Astrocyte of the cerebellum (primary cell): ENCODE measurements at regions of chr15 and their contacts with region 1.

Region 1: DNA sequence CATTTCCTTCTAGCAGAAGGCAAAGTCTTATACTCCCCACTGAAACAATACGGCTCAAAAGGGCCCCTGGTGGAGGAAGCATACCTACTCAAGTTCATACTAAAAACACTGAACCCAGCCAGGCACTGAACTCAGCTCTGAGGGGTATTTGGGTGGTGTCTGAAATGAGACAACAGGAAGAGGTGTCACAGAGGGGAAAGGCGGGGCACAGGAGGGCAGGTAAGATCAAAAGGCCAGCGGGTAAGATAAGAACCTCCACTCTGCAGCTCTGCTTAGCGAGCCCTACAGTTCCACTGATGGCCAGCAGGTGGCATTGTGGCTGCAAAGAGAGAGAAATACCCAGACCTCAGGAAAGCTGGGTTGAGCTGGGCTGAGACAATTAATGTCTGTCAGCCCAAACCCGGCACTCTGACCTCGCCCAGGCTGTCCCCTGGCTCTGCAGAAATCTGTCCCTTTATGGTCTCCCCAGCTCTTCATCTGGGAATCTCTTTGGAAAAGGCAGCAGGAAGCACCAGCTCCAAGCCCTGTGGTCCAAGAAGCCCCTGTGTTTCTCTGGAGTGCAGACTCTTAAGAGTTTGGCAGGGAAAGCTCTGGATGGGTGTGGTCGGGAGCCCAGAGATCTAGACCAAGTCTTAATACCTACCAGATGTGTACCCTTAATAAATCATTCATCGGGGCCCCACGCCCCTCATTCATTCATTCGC is 8.4 kb downstream of the MFGE8 start:
- DNase-seq: peak; percentile 43
- H3K4me3 ChIP-seq: no peak overlapping the region
- CTCF ChIP-seq: peak; percentile 99

Region 2: DNA sequence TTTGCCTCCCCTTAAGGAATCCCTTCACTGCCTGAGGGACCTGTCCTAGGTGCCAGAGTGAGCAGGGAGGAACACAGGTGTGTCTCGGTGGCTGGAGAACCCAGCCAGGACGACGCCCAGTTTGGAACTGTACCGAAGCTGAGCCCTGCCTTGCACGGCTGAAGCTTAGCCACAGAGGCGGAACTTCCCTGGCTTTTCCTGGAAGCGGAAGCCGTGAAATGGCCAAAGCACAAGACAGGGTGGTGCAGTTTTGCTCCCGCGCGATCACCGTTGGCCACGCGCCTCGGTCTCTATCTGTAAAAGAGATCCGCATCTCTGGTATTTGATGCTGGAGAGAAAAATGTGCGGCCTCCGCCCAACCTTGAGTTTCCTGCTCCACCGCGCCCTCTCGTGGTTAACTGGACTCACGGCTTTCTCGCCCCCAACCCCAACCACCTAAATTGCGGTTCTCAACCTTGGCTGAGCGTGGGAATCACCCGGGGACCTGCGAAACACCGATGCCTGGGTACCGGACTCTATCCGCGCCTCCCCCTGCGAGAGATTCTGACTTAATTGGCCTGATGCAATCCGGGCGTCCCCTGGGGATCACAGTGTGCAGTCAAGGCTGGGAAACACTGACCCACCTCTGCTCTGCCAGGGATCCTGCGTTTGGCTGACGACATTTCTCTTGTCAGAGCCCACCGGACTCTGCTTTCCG is 112.7 kb after region 1 on chr15:
- in situ Hi-C with region 1: loop called (anchors 25 kb)
- DNase-seq: peak; percentile 54
- H3K4me3 ChIP-seq: peak overlapping the region; percentile 24
- CTCF ChIP-seq: peak; percentile 89

Region 3: DNA sequence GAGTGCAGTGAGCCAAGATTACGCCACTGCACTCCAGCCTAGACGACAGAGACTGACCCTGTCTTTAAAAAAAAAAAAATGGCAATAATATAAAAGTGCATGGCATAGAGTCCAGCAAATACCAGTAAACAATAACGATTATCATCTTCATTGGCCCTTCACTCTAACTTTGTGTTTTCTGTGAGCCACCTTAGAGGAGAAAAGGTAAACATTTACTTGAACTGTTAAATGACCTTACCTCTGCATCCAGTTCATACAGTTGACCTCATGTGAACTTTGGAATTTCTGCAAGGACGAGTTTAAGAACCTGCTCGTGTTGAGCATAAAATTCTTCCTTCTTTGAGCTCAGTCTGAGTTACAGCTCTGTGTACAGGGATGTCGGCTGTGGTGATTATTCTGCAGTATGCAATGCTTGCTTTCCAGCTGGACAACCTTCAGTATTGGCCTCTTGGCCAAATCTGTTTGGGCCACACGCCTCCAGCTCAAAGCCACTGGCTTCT is 260.0 kb after region 1 on chr15:
- in situ Hi-C with region 1: loop called (anchors 5 kb)
- DNase-seq: no peak
- H3K4me3 ChIP-seq: no peak overlapping the region
- CTCF ChIP-seq: no peak

Region 4: GRCh38 chr15:89197503-89197971 is 292.8 kb after region 1 on chr15:
- in situ Hi-C with region 1: loop called (anchors 10 kb)
- DNase-seq: no peak
- H3K4me3 ChIP-seq: no peak overlapping the region
- CTCF ChIP-seq: no peak